ENCODE measurements at regions of chr1 and their contacts with region 1.

Region 1: DNA sequence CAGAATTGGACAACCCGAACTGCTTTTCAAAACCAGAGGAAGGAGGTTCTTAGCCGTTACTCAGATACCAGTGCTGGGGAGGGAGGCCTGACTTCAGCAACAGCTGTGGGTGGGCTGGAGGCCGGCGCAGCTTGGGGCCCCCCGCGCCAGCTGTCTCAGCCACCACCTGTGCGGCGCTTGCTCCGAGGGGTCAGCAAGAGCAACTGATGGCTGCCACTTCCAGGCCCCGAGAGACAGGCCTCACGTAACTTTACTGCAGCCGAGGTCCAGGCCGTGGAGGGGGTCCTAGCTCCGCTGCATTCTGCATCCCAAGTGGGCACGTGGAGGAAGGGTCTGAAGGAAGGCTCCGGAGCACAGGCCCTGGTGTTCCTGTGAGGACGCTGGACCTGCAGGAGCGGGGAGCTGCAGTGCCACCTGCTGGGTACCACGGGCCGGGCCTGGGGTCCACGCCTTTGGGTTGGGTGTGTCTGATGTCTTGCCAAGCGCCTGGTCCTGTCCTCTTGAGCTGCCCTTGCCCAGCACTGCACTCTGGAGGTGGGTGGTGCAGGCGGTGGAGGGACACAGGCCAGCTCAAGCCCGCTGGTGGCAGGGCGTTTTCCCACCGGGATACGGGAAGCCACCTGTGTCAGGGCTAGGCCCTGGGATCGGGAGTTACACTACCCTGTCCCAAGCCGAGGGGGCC is 9.8 kb downstream of the THAP3 start:
- DNase-seq: no peak
- H3K4me3 ChIP-seq: no peak overlapping the region
- H3K27me3 ChIP-seq: no peaks in the 10 kb centered on the region
- CTCF ChIP-seq: peak; percentile 52

Region 2: DNA sequence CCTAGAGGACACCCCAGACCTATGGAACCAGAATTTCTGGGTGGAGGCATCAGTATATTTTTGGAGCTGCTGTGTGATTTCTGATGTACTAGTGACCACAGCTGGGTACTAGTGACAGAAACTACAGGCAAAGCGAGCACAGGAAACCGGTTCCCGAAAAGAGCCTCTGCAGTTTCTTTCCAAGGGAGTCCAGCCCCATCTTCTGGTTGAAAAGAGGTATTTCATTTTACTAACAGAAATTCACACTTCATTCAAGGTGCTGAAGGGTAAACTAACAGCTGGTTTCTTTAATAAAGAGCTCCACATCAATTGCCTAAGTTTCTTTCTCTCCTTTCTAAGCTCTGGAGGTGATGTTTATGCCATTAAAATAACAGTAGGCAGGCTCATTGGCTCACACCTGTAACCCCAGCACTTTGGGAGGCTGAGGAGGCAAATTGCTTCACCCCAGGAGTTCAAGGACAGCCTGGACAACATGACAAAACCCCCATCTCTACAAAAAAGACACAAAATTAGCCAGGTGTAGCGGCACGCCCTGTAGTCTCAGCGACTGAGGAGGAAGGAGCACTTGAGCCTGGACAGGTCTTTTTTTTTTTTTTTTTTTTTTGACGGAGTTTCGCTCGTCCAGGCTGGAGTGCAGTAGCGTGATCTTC is 12.1 kb after region 1 on chr1:
- CTCF ChIA-PET with region 1: interaction called, 28 read pairs
- POLR2A ChIA-PET with region 1: no interaction called
- DNase-seq: no peak
- H3K4me3 ChIP-seq: no peak overlapping the region
- H3K27me3 ChIP-seq: no peaks in the 10 kb centered on the region
- CTCF ChIP-seq: peak; percentile 61